Ovary (tissue), 10 donors: ENCODE measurements at regions of chr22 and their contacts with region 1.

Region 1: DNA sequence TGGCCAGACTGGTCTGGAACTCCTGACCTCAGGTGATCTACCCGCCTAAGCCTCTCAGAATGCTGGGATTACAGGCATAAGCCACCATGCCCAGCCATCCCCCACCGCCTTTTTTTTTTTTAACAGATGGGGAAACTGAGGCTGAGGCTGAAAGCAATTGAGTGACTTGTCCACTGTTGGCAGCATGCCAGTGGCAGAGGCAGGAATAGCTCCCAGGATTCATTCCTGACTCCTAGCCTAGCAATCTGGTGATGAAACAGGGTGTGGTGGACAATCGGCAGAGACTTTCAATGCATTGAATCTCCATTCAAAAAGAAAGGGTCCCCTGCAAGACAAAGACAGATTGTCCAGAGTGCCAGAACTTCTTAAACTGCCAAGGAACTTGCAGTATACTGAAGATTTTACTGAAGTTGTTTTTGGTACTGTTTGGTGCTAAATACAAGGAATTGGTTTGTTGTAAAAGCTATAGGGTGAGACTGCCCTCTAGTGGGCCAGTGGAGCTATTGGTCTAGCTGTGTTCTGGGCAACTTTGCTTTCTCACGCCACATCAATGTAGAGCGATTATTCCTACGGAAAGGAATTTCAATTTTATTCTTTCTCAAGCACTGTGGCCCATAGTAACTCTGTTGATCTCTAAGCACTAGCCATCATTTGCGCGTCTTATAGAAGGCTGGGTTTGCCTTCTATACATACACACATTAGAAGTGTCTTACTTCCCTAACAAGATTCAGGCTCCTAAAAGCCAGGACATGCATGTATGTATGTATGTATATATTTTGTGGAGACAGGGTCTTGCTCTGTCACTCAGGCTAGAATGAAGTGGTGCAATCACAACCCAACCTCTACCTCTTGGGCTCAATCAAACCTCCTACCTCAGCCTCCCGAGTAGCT is 21.0 kb downstream of the C22orf31 start:
- DNase-seq: peak; percentile 61 to 83 (median 70)
- H3K4me3 ChIP-seq: no peak overlapping the region
- H3K27ac ChIP-seq: no peak overlapping the region
- H3K4me1 ChIP-seq: peaks cover 9% of the 10 kb centered on the region
- H3K27me3 ChIP-seq: no peaks in the 10 kb centered on the region
- CTCF ChIP-seq: peak; percentile 86 to 95 (median 92)
- EP300 ChIP-seq: no peak
- POLR2A ChIP-seq: no peak

Region 2: GRCh38 chr22:29231971-29232959 is 191.6 kb after region 1 on chr22:
- intact Hi-C with region 1: loop called in 1 of 4 experiments (anchors 10 kb)
- DNase-seq: peak; percentile 91 to 94 (median 92)
- H3K4me3 ChIP-seq: no peak overlapping the region
- H3K27ac ChIP-seq: peak overlapping the region in 1 of 2 donors; percentile 59
- H3K4me1 ChIP-seq: peaks cover 12% of the 10 kb centered on the region
- H3K27me3 ChIP-seq: no peaks in the 10 kb centered on the region
- CTCF ChIP-seq: no peak
- EP300 ChIP-seq: no peak
- POLR2A ChIP-seq: no peak